Dorsolateral prefrontal cortex (tissue), 120 donors: ENCODE measurements at regions of chr17 and their contacts with region 1.

Region 1: GRCh38 chr17:49486012-49486641 is 9.0 kb upstream of the NGFR start:
- DNase-seq: no peak
- H3K4me3 ChIP-seq: no peak overlapping the region
- H3K27ac ChIP-seq: no peak overlapping the region
- H3K27me3 ChIP-seq: peaks cover 0 to 41% (median 7%) of the 10 kb centered on the region in 45 donors
- CTCF ChIP-seq: no peak

Region 2: GRCh38 chr17:49434821-49435670 is 51.1 kb before region 1 on chr17:
- intact Hi-C with region 1: loop called (anchors 5 to 10 kb)
- DNase-seq: peak in 2 of 10 donors; percentile 54 to 60
- H3K4me3 ChIP-seq: no peak overlapping the region
- H3K27ac ChIP-seq: no peak overlapping the region
- H3K27me3 ChIP-seq: peaks cover 0 to 27% (median 9%) of the 10 kb centered on the region in 45 donors
- CTCF ChIP-seq: peak in 55 of 56 donors; percentile 54 to 89 (median 77)

Region 3: GRCh38 chr17:49659661-49660382 is 173.7 kb after region 1 on chr17:
- intact Hi-C with region 1: no loop called
- DNase-seq: no peak
- H3K4me3 ChIP-seq: no peak overlapping the region
- H3K27ac ChIP-seq: peak overlapping the region in 1 of 59 donors; percentile 22
- H3K27me3 ChIP-seq: no peaks in the 10 kb centered on the region
- CTCF ChIP-seq: no peak

Region 4: DNA sequence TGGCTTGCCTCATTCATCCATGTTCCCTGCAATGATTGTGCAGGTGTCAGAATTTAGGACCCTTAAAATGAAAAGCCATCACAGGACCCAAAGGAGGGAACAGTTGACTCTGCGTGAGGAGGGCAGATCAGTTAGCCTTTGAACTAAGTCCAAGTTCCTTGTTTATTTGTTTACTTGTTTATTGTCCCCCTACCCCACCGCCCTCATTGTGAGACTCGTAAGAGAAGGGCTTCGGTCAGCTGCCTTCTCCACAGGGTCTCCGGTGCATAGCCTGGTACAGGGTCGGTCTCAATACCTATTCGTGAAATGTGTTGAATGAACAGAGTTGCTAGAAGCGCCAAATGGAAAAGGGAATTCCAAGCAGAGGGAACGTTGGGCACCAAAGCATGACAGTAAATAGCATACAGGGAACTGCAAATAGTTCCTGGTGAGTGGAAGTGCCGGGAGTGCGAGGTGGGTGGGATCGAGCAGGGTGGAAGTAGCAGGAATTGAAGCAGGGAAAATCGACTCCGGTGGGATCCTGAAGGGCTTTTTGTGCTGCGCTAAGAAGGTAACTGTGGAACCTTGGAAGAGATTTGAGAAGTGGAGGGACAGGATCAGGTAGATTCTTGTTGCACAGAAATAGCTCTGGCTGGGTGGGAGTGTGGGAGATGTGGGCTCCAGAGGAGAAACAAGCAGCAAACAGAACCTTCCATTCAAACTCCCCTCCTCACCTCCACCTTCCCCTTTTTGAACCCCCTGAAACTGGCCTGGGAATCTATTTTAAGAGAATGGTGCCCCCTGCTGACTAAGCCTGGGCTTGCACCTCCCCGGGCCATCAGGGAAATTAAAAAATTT is 208.9 kb after region 1 on chr17:
- intact Hi-C with region 1: no loop called
- DNase-seq: peak in 7 of 10 donors; percentile 52 to 73 (median 59)
- H3K4me3 ChIP-seq: peak overlapping the region in 43 of 59 donors; percentile 1 to 56 (median 28)
- H3K27ac ChIP-seq: peak overlapping the region in 6 of 59 donors; percentile 1 to 74 (median 32)
- H3K27me3 ChIP-seq: no peaks in the 10 kb centered on the region
- CTCF ChIP-seq: peak; percentile 76 to 98 (median 93)